ENCODE measurements at regions of chr6 and their contacts with region 1.

Region 1: DNA sequence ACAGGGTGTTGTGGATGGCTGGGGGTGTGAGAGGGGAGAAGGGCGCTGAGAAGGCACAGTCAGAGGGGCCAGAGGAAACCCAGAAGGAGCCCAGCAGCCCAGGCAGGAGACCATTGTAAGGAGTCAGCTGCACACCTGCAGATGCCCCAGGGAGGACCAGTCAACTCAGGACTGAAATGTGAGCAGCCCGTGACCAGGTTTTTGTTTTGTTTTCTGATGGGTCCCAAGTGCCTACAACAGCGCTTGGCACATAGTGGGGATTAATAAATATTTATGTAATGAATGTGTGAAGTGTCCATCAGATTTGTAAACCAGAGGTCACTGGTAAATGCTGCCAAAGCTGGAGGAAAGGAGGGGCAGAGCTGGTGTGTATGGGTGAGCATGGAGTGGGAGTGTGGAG is 30.2 kb downstream of the TRAM2 start:
- DNase-seq: no peak
- H3K4me3 ChIP-seq: no peak overlapping the region
- CTCF ChIP-seq: no peak

Region 2: GRCh38 chr6:52419809-52420670 is 126.6 kb before region 1 on chr6 and contains the start of gene EFHC1:
- in situ Hi-C with region 1: loop called (anchors 10 kb)
- DNase-seq: peak; percentile 94
- H3K4me3 ChIP-seq: peak within 1 kb of the TSS; percentile 84
- CTCF ChIP-seq: no peak

Region 3: DNA sequence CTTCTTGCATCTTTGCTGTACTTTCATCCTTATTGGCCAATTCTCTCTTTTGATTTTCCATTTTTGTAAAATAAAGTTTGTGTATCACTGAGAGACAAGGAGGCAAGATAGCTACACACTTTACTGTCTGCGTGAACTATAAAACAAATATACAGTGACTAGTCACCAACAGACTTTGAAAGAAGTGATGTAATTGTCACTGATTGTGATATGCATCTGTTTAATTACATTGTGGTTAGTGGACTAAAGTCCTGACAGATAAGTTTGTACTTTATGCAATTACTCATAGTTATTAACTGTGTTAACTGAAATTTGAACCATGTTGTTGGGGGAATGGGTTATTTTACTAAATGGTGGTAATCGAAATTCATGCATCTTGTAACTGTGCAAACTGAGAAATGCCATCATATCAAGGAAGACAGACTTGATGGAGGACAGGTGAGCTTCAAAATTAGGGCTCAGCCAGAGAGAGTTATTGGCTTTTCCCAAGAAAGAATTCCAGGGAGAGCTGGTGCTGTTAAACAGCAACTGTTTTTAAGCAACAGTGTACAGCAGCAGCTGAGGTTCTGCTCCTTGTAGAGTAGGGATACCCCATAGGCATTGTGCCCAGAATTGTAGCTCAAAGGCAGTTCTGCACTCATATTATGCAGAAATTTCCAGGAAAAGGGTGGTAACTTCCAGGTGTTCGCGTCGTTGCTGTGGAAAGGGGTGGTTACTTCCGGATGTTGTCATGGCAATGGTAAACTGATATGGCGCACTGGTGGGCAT is 63.6 kb before region 1 on chr6:
- in situ Hi-C with region 1: no loop called
- DNase-seq: no peak
- H3K4me3 ChIP-seq: no peak overlapping the region
- CTCF ChIP-seq: no peak